ENCODE measurements at regions of chr9 and their contacts with region 1.

Region 1: DNA sequence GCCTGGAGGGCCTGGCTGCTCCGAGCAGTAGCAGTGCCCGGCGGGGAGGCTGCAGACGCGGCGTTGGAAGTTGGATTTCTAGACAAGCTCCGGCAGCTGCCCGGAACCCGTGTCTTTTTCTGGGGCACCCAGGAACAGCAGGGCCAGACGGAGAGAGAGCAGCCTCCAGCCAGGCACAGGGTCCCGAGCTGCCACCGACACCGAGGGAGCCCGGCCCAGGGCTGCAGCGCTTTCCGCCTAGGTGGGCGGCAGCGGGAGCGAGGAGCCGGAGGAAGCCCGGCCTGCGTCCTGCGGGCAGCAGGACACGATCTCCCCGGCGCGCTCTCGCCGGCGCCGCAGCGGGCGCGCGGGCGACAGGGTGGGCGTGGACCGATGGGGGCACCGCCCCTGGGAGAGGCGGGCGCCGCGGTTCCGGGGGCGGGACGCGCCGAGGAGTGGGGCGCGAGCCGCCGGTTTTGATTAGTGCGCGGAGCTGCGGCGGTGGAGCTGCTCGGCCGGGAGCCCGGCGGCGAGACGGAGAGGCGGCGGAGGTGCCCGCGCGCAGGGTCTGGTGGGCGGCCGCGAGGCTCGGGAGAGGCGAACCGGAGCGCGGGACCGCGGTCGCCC is at the start of gene UGCG:
- DNase-seq: peak; percentile 86
- H3K4me3 Mint-ChIP-seq: peak within 1 kb of the TSS; percentile 81
- H3K27ac Mint-ChIP-seq: peak within 1 kb of the TSS; percentile 87
- H3K4me1 Mint-ChIP-seq: peaks cover 17% of the 10 kb centered on the region
- H3K27me3 Mint-ChIP-seq: no peaks in the 10 kb centered on the region
- total RNA-seq, gene UGCG: 8.8 to 10.5 TPM

Region 2: GRCh38 chr9:111483862-111484571 is 412.4 kb before region 1 on chr9 and contains the start of gene ECPAS:
- CTCF ChIA-PET with region 1: no interaction called
- intact Hi-C with region 1: loop called (anchors 5 kb)
- DNase-seq: peak; percentile 66
- H3K4me3 Mint-ChIP-seq: peak within 1 kb of the TSS; percentile 78
- H3K27ac Mint-ChIP-seq: peak within 1 kb of the TSS; percentile 83
- H3K4me1 Mint-ChIP-seq: peaks cover 29% of the 10 kb centered on the region
- H3K27me3 Mint-ChIP-seq: peaks cover under 1% of the 10 kb centered on the region
- total RNA-seq, gene ECPAS: 56.8 to 58.1 TPM

Region 3: GRCh38 chr9:111805830-111806241 is 90.6 kb before region 1 on chr9:
- CTCF ChIA-PET with region 1: interaction called, 6 read pairs
- intact Hi-C with region 1: loop called (anchors 5 kb)
- DNase-seq: no peak
- H3K4me3 Mint-ChIP-seq: no peak overlapping the region
- H3K27ac Mint-ChIP-seq: no peak overlapping the region
- H3K4me1 Mint-ChIP-seq: peaks cover 32% of the 10 kb centered on the region
- H3K27me3 Mint-ChIP-seq: no peaks in the 10 kb centered on the region

Region 4: DNA sequence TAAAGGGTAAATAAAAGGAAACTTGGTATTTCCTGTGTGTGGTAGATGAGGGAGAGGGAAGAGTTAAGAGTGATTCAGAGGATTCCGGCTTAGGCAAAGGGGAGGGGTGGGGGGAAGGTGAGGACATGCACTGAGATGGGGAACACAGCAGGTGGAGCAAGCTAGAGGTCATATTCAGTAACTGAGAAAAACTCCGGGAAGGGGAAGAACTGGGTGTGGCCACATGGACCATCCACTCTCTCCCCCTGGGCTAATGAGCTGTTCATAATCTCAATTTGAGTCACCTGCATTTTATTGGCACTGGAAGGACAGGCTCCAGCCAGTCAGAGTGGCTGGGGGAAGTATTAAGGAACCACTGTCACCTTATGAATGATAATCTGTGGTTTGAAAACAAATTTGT is 44.9 kb before region 1 on chr9:
- CTCF ChIA-PET with region 1: no interaction called
- intact Hi-C with region 1: no loop called
- DNase-seq: no peak
- H3K4me3 Mint-ChIP-seq: no peak overlapping the region
- H3K27ac Mint-ChIP-seq: no peak overlapping the region
- H3K4me1 Mint-ChIP-seq: no peaks in the 10 kb centered on the region
- H3K27me3 Mint-ChIP-seq: no peaks in the 10 kb centered on the region

Region 5: GRCh38 chr9:111916234-111916645 is 19.8 kb after region 1 on chr9:
- CTCF ChIA-PET with region 1: interaction called, 19 read pairs
- intact Hi-C with region 1: loop called (anchors 1 kb)
- DNase-seq: peak; percentile 45
- H3K4me3 Mint-ChIP-seq: no peak overlapping the region
- H3K27ac Mint-ChIP-seq: peak overlapping the region; percentile 81
- H3K4me1 Mint-ChIP-seq: peaks cover 53% of the 10 kb centered on the region
- H3K27me3 Mint-ChIP-seq: no peaks in the 10 kb centered on the region

Region 6: DNA sequence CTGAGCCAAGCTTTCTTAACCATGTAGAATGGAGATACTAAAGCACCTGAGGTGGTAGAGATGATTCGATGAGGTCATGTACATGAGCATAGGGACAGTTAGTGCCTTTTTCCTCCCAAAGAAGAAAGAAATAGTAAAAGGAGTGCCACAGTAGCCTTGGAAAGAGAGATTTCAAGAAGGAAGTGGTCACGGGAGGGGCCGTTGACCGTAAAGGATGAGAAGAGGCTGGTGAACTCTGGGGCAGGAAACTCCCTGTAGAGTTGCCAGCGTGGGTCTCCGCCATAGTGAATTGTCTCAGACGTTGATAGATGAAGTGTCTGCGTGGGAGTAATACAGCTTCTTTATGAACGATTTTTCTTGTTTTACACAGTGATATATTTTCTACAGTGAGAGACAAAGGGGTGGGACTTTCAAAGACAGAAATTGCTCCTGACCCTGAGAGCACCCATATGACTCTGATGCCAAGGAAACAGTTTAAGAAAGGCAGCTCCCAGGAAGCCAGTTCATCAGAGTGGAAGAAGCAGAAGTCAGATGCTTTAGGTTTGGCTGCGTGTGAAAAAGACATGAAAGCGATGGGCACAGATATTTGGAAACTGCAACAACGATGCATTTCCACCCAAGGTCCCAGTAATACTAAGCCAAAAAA is 41.4 kb after region 1 on chr9:
- CTCF ChIA-PET with region 1: no interaction called
- intact Hi-C with region 1: loop called (anchors 1 kb)
- DNase-seq: peak; percentile 87
- H3K4me3 Mint-ChIP-seq: peak overlapping the region; percentile 32
- H3K27ac Mint-ChIP-seq: peak overlapping the region; percentile 86
- H3K4me1 Mint-ChIP-seq: peaks cover 23% of the 10 kb centered on the region
- H3K27me3 Mint-ChIP-seq: no peaks in the 10 kb centered on the region

Region 7: DNA sequence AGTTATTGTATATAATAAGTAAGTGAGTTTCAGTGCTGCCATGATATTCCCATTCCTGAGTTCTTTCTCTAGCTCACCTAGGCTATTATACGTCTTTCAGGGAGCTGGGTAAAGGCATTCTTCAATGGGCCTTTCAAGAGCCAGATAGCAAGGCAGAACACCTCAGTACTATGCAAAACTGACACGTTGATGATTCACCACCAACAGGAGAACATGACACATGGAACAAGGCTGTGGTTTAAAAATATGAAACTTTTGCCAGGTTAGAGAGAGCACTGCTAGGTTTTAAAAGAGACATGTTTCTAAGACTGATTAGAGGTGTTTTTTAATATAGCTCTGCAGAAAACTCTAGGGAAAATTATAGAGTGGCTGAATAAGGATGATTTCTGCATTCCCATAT is 96.1 kb after region 1 on chr9:
- CTCF ChIA-PET with region 1: no interaction called
- intact Hi-C with region 1: loop called (anchors 2 kb)
- DNase-seq: peak; percentile 61
- H3K4me3 Mint-ChIP-seq: no peak overlapping the region
- H3K27ac Mint-ChIP-seq: no peak overlapping the region
- H3K4me1 Mint-ChIP-seq: peaks cover 31% of the 10 kb centered on the region
- H3K27me3 Mint-ChIP-seq: no peaks in the 10 kb centered on the region

Region 8: DNA sequence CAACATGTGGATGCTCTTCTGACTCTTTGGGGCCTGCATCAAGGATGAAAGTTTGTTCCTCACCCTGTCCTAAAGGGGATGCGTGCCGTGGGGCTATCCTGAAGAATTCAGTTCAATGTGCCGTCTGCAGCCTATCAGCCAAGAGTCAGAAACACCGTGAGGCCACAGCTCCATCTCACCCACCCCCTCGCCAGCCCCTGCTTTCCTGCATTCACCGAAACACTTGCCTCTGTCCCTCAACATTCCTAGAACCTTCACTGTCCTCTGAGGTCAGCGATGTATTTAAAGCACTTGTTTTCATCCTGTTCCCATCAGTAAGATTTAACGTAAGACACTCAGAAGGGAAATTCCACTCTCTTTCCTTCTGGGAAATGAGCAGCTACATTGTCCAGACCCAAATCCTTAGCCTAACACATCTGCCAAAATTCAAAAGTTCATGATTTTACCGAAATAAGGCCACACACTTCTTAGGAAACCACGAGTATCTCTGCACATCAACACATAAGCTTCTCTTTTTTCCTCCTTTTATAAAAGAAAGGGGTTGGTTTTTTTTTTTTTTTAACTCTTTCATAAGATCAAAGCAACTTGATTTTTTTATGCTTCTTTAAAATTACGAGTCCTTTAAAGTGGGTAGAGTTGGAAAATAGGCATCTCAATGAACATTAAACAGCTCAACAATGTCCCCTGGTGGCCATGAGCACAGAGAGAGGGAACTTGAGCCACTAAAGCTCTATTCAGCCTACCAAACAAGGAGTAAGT is 178.0 kb after region 1 on chr9:
- CTCF ChIA-PET with region 1: interaction called, 4 read pairs
- intact Hi-C with region 1: loop called (anchors 1 kb)
- DNase-seq: peak; percentile 85
- H3K4me3 Mint-ChIP-seq: no peak overlapping the region
- H3K27ac Mint-ChIP-seq: no peak overlapping the region
- H3K4me1 Mint-ChIP-seq: peaks cover 28% of the 10 kb centered on the region
- H3K27me3 Mint-ChIP-seq: no peaks in the 10 kb centered on the region

Measured in activated naive CD4-positive, alpha-beta T cell treated with anti-CD3 and anti-CD28 coated beads for 36 hours (primary cell).